Dorsolateral prefrontal cortex (tissue), 120 donors: ENCODE measurements at regions of chr15 and their contacts with region 1.

Region 1: DNA sequence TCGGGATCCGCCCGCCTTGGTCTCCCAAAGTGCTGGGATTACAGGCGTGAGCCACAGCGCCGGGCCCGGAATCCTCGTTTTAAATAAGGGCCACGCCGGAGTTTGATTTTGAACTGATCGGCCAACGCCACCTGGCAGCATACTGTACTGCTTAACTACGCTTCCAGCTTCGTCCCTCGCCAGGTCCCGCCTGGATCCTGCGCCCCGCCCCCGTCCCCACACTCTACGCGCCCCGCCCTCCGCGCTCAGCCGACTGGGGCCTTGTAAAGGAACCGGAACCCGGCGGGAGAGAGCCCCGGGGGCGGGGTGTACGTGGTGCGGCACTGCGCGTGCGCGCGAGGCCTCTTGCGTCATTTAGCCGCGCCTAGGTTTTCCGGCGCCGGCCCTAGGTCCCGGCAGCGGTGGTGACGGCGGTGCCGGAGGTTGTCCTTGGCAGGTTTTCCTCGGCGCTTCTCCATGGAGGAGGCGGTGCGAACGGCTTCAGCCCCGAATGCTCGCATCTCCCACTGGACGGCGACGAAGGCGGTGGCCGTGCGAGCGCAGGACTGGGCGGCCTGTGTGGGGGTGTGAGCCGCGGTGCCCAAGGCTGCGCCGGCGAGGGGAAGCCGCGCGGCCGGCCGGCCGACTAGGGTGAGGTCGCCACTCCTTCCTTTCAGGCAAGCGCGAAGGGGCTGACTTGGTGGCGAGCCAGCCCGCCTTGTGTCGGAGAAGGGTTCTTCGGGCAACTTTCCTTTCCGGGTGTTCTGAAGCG is at the start of gene NIPA2:
- DNase-seq: peak; percentile 92 to 97 (median 95)
- H3K4me3 ChIP-seq: peak within 1 kb of the TSS; percentile 52 to 100 (median 90)
- H3K27ac ChIP-seq: peak within 1 kb of the TSS in 58 of 59 donors; percentile 68 to 97 (median 92)
- H3K27me3 ChIP-seq: no peaks in the 10 kb centered on the region
- CTCF ChIP-seq: peak in 32 of 56 donors; percentile 2 to 60 (median 33)
- total RNA-seq, gene NIPA2: 18.5 to 49.2 (median 35.5) TPM

Region 2: GRCh38 chr15:22786868-22787698 is 51.4 kb before region 1 on chr15:
- intact Hi-C with region 1: loop called (anchors 1 kb)
- DNase-seq: peak in 4 of 10 donors; percentile 24 to 63 (median 44)
- H3K4me3 ChIP-seq: peak overlapping the region; percentile 59 to 97 (median 84)
- H3K27ac ChIP-seq: peak overlapping the region; percentile 33 to 99 (median 90)
- H3K27me3 ChIP-seq: no peaks in the 10 kb centered on the region
- CTCF ChIP-seq: no peak

Region 3: GRCh38 chr15:22811640-22812039 is 26.8 kb before region 1 on chr15:
- intact Hi-C with region 1: loop called in 1 of 2 experiments (anchors 2 kb)
- DNase-seq: peak; percentile 19 to 91 (median 74)
- H3K4me3 ChIP-seq: peak overlapping the region in 4 of 59 donors; percentile 3 to 16 (median 10)
- H3K27ac ChIP-seq: peak overlapping the region in 55 of 59 donors; percentile 4 to 86 (median 70)
- H3K27me3 ChIP-seq: no peaks in the 10 kb centered on the region
- CTCF ChIP-seq: peak in 54 of 56 donors; percentile 34 to 79 (median 56)

Region 4: GRCh38 chr15:22980189-22981050 is 142.0 kb after region 1 on chr15 and contains the start of gene CYFIP1:
- intact Hi-C with region 1: loop called in 1 of 2 experiments (anchors 5 kb)
- DNase-seq: peak in 8 of 10 donors; percentile 44 to 82 (median 60)
- H3K4me3 ChIP-seq: peak within 1 kb of the TSS; percentile 57 to 94 (median 84)
- H3K27ac ChIP-seq: peak within 1 kb of the TSS in 55 of 59 donors; percentile 12 to 88 (median 74)
- H3K27me3 ChIP-seq: no peaks in the 10 kb centered on the region
- CTCF ChIP-seq: no peak
- total RNA-seq, gene CYFIP1: 46.3 to 138 (median 84.8) TPM

Region 5: DNA sequence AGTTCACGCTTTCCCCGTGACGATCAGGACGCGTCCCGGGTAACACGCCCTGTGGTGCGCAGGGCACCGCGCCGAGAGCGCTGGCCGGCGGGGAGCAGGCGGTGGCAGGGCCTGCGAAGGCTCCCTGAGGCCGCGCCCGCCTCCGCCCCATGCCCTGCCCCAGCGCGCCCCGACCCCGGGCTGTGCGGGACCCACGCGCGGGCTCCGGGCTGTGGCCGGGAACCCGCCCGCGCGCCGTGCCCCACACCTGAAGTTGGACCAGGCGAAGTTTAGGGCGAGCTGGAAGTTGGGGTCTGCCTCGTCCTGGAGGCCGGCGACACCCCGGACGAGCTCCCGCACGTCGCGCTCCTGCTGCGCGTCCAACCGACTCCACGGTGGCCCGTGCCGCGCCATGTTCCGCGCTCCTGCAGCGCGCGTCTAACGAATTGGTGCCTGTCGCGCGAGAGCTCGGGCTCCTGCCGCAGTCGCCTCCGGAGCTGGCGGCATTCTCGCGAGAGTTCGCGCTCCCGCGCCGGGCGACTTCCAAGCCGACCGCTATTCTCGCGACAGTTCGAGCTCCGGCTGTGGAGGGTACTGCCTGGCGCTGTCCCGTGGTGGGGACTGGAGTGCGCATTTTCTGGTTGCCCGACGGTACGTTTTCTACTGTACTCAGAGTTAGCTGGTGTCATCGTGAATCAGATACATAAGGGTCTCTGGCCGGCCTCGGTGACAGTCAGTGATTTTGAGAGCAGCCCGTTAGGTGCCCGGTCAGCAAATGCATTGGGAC is 200.9 kb after region 1 on chr15 and contains the start of gene TUBGCP5:
- intact Hi-C with region 1: loop called in 1 of 2 experiments (anchors 5 kb)
- DNase-seq: peak; percentile 87 to 98 (median 94)
- H3K4me3 ChIP-seq: peak within 1 kb of the TSS; percentile 54 to 98 (median 76)
- H3K27ac ChIP-seq: peak within 1 kb of the TSS in 58 of 59 donors; percentile 25 to 94 (median 80)
- H3K27me3 ChIP-seq: no peaks in the 10 kb centered on the region
- CTCF ChIP-seq: peak in 54 of 56 donors; percentile 16 to 65 (median 46)
- total RNA-seq, gene TUBGCP5: 15.4 to 49.6 (median 31.7) TPM